AG04449 (cell line): ENCODE measurements at regions of chr15 and their contacts with region 1.

Region 1: DNA sequence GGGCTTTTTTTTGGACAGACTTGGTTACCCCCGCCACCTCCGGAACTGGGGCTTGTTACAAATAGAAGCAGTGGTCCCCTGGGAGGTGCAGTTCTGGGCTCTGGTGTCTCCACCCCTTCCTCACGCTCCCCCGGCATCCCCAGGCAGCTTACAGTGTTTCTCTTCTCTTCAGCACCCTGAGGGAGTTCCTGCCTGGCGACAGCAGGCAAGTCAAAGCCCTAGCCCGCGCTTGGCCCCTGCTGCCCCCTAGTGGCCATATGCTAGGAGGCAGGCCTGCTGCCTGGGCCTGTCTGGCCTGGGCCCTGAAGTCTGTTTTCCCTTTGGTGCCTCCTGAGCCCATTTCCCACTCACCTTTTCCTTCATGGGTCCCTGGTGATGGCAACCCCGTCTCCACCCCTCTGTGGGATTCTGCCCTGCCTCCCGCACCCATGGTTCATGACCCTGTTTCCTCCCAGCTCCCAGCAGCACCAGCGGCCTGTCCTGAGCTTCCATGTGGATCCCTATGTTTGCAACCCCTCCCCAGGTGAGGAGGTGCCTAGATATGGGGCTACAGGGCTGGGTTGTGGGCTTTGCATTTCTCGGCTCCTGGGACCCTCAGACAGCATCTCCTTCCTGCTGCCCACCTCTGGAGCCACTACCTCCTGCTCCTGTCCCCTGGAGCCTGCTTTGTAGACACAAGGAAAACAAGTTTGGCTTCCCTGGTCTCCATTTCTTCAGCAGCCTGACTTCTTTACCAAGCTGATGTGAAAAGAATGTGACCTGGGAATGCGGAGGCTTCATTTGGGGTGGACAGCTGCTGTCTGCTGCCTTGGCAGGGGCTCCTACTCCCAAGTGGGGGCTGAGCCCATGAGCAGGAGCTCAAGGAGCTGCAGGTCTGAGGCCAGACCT is 2.2 kb downstream of the SNX22 start:
- DNase-seq: peak; percentile 29
- H3K4me3 ChIP-seq: no peak overlapping the region
- CTCF ChIP-seq: peak; percentile 99

Region 2: DNA sequence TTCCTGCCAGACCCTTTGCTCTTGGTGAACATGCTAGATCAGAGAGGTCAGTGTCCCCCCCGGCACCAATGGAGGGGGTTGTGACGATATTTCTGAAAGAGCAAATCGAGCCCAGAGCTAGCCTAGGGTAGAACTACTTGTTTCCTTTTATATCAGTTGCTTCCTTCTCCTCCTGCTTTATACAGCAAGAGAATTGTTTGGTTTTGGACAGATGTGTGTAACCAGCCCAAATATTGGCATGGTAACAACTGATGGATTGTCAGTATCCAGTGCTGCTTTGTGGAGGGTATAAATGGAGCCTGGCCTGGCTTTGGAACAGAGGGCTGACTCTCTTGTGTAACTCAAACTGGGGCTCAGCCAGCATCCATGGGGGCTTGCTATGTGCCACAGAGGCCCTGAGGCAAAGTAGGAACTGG is 30.8 kb before region 1 on chr15:
- CTCF ChIA-PET with region 1: interaction called, 12 read pairs
- POLR2A ChIA-PET with region 1: no interaction called
- DNase-seq: no peak
- H3K4me3 ChIP-seq: no peak overlapping the region
- CTCF ChIP-seq: no peak

Region 3: DNA sequence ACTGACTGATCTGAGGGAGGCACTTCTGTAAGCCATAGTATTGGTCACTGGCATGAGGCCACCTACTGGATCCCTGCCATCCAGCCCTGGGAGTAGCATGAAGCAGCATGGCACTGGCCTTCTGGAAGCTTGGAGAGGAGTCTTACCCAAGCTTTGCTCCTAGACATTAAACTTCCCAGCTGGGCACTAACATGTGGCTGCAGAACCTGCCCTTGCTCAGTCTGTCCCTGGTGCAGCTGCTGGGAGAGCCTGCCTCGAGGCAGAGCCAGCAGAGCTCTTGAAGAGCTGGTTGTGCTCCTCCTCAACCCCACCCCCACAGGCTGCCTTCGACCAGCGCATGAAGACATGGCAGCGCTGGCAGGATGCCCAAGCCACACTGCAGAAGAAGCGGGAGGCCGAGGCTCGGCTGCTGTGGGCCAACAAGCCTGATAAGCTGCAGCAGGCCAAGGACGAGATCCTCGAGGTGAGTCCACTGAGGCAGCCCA is 19.3 kb before region 1 on chr15:
- CTCF ChIA-PET with region 1: interaction called, 22 read pairs
- POLR2A ChIA-PET with region 1: no interaction called
- DNase-seq: no peak
- H3K4me3 ChIP-seq: no peak overlapping the region
- CTCF ChIP-seq: no peak